AG04450 (cell line): ENCODE measurements at regions of chr4 and their contacts with region 1.

Region 1: GRCh38 chr4:83110223-83110945 is 4.1 kb downstream of the PLAC8 start:
- DNase-seq: peak; percentile 21
- H3K4me3 ChIP-seq: peak overlapping the region; percentile 62
- H3K27ac ChIP-seq: no peak overlapping the region
- H3K27me3 ChIP-seq: no peaks in the 10 kb centered on the region
- CTCF ChIP-seq: peak; percentile 77

Region 2: GRCh38 chr4:82851885-82852750 is 258.3 kb before region 1 on chr4:
- CTCF ChIA-PET with region 1: no interaction called
- POLR2A ChIA-PET with region 1: interaction called, 11 read pairs
- DNase-seq: no peak
- H3K4me3 ChIP-seq: no peak overlapping the region
- H3K27ac ChIP-seq: no peak overlapping the region
- H3K27me3 ChIP-seq: no peaks in the 10 kb centered on the region
- CTCF ChIP-seq: peak; percentile 52

Region 3: GRCh38 chr4:83093130-83093529 is 17.3 kb before region 1 on chr4:
- CTCF ChIA-PET with region 1: interaction called, 23 read pairs
- POLR2A ChIA-PET with region 1: no interaction called
- DNase-seq: no peak
- H3K4me3 ChIP-seq: no peak overlapping the region
- H3K27ac ChIP-seq: no peak overlapping the region
- H3K27me3 ChIP-seq: peaks cover 27% of the 10 kb centered on the region
- CTCF ChIP-seq: no peak

Region 4: DNA sequence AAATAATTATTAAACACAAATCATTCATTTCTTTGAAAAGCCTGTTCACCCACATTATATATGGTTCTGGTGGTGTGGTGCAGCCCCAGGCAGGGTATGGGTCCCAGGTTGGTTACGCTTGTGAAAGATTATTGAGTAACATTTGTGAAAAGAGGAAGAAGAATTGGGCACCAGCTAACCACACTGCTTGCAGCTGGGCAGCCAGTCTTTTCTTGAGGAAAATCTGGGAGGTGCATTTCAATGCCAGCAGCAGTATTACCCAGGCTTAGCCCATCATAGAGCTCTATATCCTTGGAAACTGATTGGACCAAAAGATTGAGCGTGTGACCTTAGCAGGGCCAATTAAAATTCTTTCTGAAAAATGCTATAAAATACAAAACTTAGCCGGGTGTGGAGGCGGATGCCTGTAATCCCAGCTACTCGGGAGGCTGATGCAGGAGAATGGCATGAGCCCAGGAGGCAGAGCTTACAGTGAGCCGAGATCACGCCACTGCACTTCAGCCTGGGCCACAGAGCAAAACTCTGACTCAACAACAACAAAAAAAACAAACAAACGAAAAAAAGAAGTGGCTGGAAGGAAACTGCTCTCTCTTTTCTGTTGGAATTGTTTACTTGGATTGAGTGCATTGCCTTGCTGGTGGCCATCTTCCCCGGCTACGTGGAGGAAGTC is 13.9 kb after region 1 on chr4:
- CTCF ChIA-PET with region 1: interaction called, 10 read pairs
- POLR2A ChIA-PET with region 1: no interaction called
- DNase-seq: no peak
- H3K4me3 ChIP-seq: no peak overlapping the region
- H3K27ac ChIP-seq: no peak overlapping the region
- H3K27me3 ChIP-seq: no peaks in the 10 kb centered on the region
- CTCF ChIP-seq: no peak